ENCODE measurements at regions of chr22 and their contacts with region 1.

Region 1: DNA sequence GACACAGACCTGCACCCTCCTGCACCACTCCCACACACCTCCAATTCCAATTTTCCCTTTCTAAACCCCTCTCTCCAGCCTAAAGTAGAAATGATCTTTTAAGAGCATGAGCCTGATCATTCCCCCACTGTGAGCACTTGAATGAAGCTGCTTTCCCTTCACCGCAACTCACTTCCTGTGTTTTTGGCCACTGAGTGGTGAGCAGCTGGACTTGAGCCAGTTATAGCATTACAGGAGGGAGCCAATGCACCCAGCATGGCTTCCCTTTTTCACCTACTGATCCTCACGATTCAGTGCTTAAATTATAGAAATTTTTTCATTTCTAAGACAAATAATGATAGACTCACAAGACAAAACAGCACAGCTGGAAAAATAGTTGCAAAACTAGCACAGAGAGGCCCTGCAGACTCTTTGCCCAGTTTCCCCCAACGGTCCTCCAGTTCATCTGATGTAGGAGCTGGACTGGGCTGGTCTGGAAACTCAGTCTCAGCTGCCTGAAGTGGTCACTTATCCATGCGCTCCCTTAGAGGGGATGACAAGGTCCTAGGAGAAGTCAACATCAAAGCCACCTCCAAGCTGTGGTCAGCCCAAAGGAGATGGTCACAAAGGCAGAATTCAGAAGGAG is 9.7 kb upstream of the APOL4 start:
- DNase-seq: no peak
- ATAC-seq: peak; percentile 72
- H3K4me3 ChIP-seq: no peak overlapping the region
- H3K27ac ChIP-seq: no peak overlapping the region
- H3K4me1 ChIP-seq: peaks cover 4% of the 10 kb centered on the region
- H3K27me3 ChIP-seq: no peaks in the 10 kb centered on the region
- CTCF ChIP-seq: no peak
- EP300 ChIP-seq: no peak
- POLR2A ChIP-seq: no peak
- RAD21 ChIP-seq: no peak

Region 2: DNA sequence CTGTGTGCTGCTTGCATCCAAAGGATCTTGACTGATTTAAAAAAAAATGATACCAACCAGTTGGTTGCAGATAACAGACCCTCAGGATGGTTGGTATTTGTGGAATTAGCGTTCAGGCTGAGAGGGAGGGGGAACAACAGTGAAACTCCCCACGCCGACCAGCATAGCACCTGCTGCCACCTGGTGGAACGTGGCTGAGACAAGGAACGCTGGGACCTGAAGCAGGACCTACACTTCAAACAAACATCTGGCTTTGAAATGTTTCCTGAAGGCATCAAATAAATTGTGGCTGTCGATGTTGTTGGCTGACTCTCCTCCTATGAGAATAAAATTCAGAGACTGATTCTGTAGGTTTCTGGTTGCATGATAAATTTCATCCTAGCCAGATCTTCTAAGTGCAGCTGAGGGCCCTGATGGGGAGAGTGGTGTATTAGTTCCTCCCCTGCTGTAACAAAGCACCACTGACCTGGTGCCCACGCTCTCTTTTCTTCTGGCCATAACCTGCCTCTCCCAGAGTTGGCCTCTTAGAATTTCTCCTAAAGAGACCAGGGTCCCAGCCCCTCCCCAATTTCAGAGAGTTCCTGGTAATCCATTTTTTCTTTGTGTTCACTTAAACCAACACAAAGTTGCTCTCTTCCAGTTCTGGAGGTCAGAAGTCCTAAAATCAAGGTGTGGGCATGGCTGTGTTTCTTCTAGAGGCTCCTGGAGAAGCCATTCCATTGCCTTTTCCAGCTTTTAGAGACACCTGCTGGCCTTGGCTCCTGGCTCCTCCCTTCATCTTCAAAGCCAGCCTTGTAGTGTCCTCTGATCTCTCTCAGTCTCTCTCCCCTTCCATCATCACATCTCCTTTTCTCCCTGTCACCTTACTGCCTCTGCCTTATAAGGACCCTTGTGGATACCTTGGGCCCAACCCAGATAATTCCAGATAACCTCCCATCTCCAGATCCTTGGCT is 10.7 kb after region 1 on chr22:
- CTCF ChIA-PET with region 1: interaction called, 13 read pairs
- POLR2A ChIA-PET with region 1: no interaction called
- RAD21 ChIA-PET with region 1: interaction called, 4 read pairs
- SMC1A ChIA-PET with region 1: interaction called, 9 read pairs
- in situ Hi-C with region 1: no loop called
- intact Hi-C with region 1: no loop called
- DNase-seq: no peak
- ATAC-seq: peak; percentile 98
- H3K4me3 ChIP-seq: no peak overlapping the region
- H3K27ac ChIP-seq: no peak overlapping the region
- H3K4me1 ChIP-seq: no peaks in the 10 kb centered on the region
- H3K27me3 ChIP-seq: no peaks in the 10 kb centered on the region
- CTCF ChIP-seq: peak; percentile 76 to 83 (median 81)
- EP300 ChIP-seq: no peak
- POLR2A ChIP-seq: no peak
- RAD21 ChIP-seq: peak; percentile 67